BJ (cell line): ENCODE measurements at regions of chr4 and their contacts with region 1.

Region 1: DNA sequence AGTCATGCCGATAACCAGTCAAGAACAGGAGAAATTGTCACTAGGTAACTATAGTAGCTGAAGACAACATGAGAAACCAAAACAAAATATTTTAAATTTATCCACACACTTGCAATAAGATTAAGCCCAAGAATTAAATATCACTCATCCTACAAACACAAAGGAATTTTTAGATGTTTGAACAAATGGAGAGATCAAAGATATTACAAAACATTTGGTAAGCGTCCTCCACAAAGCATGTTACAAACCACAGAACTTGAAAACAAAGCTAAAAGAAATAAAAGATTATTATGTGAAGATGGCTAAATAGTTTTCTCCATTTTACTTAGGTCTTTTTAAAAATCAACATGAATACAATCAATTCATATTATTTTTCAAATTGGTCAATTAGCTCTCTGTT is 631.9 kb upstream of the INTU start:
- DNase-seq: no peak
- H3K4me3 ChIP-seq: no peak overlapping the region
- H3K27me3 ChIP-seq: no peaks in the 10 kb centered on the region
- CTCF ChIP-seq: no peak

Region 2: GRCh38 chr4:127045872-127046271 is 45.0 kb after region 1 on chr4:
- CTCF ChIA-PET with region 1: no interaction called
- POLR2A ChIA-PET with region 1: no interaction called
- DNase-seq: no peak
- H3K4me3 ChIP-seq: no peak overlapping the region
- H3K27me3 ChIP-seq: no peaks in the 10 kb centered on the region
- CTCF ChIP-seq: no peak

Region 3: DNA sequence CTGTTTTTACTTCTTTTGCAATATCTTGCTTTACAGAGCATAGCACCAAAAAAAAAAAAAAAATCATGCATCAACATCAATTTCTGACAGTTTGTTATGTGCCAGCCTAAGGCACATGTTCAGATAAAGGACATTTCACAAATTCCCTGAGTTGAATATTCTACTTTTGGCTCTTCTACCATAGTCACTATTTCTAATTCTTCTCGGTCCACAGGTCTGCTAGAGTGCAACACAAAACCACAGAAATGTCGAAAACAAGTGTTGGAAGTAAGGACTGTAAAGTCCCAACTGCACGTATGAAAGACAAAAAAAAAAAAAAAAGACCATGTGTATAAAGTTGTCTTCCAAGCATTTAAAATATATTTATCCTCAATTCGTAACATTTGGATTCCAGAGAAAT is 137.7 kb after region 1 on chr4:
- CTCF ChIA-PET with region 1: no interaction called
- POLR2A ChIA-PET with region 1: interaction called, 12 read pairs
- DNase-seq: peak; percentile 28
- H3K4me3 ChIP-seq: no peak overlapping the region
- H3K27me3 ChIP-seq: no peaks in the 10 kb centered on the region
- CTCF ChIP-seq: no peak